ENCODE measurements at regions of chr14 and their contacts with region 1.

Region 1: GRCh38 chr14:100747021-100747586 is 20.4 kb downstream of the DLK1 start:
- DNase-seq: peak; percentile 99
- H3K4me3 Mint-ChIP-seq: no peak overlapping the region
- H3K27ac Mint-ChIP-seq: peak overlapping the region; percentile 83
- H3K4me1 Mint-ChIP-seq: no peaks in the 10 kb centered on the region
- H3K27me3 Mint-ChIP-seq: no peaks in the 10 kb centered on the region
- CTCF ChIP-seq: no peak

Region 2: GRCh38 chr14:100440187-100440631 is 306.9 kb before region 1 on chr14:
- CTCF ChIA-PET with region 1: interaction called, 10 read pairs
- POLR2A ChIA-PET with region 1: no interaction called
- intact Hi-C with region 1: no loop called
- DNase-seq: peak; percentile 89
- H3K4me3 Mint-ChIP-seq: peak overlapping the region; percentile 48
- H3K27ac Mint-ChIP-seq: peak overlapping the region; percentile 87
- H3K4me1 Mint-ChIP-seq: peaks cover 23% of the 10 kb centered on the region
- H3K27me3 Mint-ChIP-seq: no peaks in the 10 kb centered on the region
- CTCF ChIP-seq: peak; percentile 85

Region 3: GRCh38 chr14:100504372-100505078 is 242.6 kb before region 1 on chr14:
- CTCF ChIA-PET with region 1: no interaction called
- POLR2A ChIA-PET with region 1: no interaction called
- intact Hi-C with region 1: no loop called
- DNase-seq: peak; percentile 6
- H3K4me3 Mint-ChIP-seq: no peak overlapping the region
- H3K27ac Mint-ChIP-seq: no peak overlapping the region
- H3K4me1 Mint-ChIP-seq: no peaks in the 10 kb centered on the region
- H3K27me3 Mint-ChIP-seq: no peaks in the 10 kb centered on the region
- CTCF ChIP-seq: no peak

Region 4: DNA sequence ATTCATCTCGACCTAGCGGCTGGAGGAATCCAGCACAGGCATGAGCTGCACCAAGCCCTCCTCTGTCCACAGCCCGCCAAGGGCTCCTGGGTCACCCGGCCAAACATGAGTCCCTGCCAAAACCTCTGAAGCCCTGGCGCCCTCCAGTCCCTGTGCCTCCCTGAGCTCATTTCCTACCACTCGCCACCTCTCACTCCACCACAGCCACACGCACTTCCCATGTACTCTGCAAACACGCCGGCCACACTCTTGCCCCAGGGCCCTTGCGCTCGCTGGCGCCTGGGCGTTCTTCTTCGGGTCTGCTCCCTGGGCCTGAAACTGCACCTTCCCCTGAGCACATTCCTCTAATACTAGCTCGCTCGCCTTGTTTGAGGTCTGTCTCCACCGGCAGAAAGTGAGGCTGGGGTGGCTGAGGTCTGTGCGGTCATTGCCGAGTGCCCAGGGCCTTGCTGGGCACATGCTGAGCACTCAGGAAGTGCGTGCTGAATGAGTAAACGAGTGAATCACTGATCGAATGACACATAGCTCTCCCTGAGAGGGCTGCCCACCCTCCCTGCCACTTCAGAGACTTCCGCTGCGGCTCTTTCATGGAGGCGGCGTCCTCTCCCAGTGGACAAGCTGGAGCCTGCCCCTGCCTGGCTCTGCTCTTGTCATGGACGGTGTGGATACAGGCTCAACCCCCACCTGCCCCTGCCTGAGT is 54.1 kb before region 1 on chr14:
- CTCF ChIA-PET with region 1: no interaction called
- POLR2A ChIA-PET with region 1: no interaction called
- intact Hi-C with region 1: loop called (anchors 1 kb)
- DNase-seq: peak; percentile 96
- H3K4me3 Mint-ChIP-seq: peak overlapping the region; percentile 73
- H3K27ac Mint-ChIP-seq: peak overlapping the region; percentile 92
- H3K4me1 Mint-ChIP-seq: peaks cover 28% of the 10 kb centered on the region
- H3K27me3 Mint-ChIP-seq: no peaks in the 10 kb centered on the region
- CTCF ChIP-seq: no peak

Region 5: GRCh38 chr14:100761481-100761880 is 14.4 kb after region 1 on chr14:
- CTCF ChIA-PET with region 1: interaction called, 4 read pairs
- POLR2A ChIA-PET with region 1: interaction called, 13 read pairs
- intact Hi-C with region 1: no loop called
- DNase-seq: peak; percentile 74
- H3K4me3 Mint-ChIP-seq: no peak overlapping the region
- H3K27ac Mint-ChIP-seq: peak overlapping the region; percentile 69
- H3K4me1 Mint-ChIP-seq: peaks cover 12% of the 10 kb centered on the region
- H3K27me3 Mint-ChIP-seq: no peaks in the 10 kb centered on the region
- CTCF ChIP-seq: no peak

Region 6: GRCh38 chr14:100900837-100901390 is 153.8 kb after region 1 on chr14:
- CTCF ChIA-PET with region 1: no interaction called
- POLR2A ChIA-PET with region 1: no interaction called
- intact Hi-C with region 1: no loop called
- DNase-seq: peak; percentile 35
- H3K4me3 Mint-ChIP-seq: no peak overlapping the region
- H3K27ac Mint-ChIP-seq: no peak overlapping the region
- H3K4me1 Mint-ChIP-seq: peaks cover 5% of the 10 kb centered on the region
- H3K27me3 Mint-ChIP-seq: peaks cover 92% of the 10 kb centered on the region
- CTCF ChIP-seq: peak; percentile 40